Naive thymus-derived CD4-positive, alpha-beta T cell (primary cell): ENCODE measurements at regions of chr12 and their contacts with region 1.

Region 1: GRCh38 chr12:94074980-94075928 is 73.1 kb upstream of the PLXNC1 start:
- DNase-seq: peak in 1 of 9 donors; percentile 20
- ATAC-seq: peak; percentile 67
- H3K4me3 ChIP-seq: no peak overlapping the region
- H3K4me3 Mint-ChIP-seq: no peak overlapping the region
- H3K27ac ChIP-seq: no peak overlapping the region
- H3K27ac Mint-ChIP-seq: no peak overlapping the region
- H3K4me1 ChIP-seq: peaks cover 0 to 20% of the 10 kb centered on the region in 2 donors
- H3K4me1 Mint-ChIP-seq: peaks cover 18 to 67% (median 28%) of the 10 kb centered on the region in 7 donors
- H3K27me3 ChIP-seq: no peaks in the 10 kb centered on the region
- H3K27me3 Mint-ChIP-seq: peaks cover 0 to 6% (median 3%) of the 10 kb centered on the region in 5 donors

Region 2: GRCh38 chr12:93502802-93503623 is 572.2 kb before region 1 on chr12:
- CTCF ChIA-PET with region 1: interaction called, 13 read pairs
- POLR2A ChIA-PET with region 1: no interaction called
- intact Hi-C with region 1: no loop called
- DNase-seq: peak; percentile 16 to 71 (median 54)
- ATAC-seq: peak; percentile 67
- H3K4me3 ChIP-seq: no peak overlapping the region
- H3K4me3 Mint-ChIP-seq: no peak overlapping the region
- H3K27ac ChIP-seq: no peak overlapping the region
- H3K27ac Mint-ChIP-seq: peak overlapping the region in 3 of 9 donors; percentile 36 to 69 (median 60)
- H3K4me1 ChIP-seq: no peaks in the 10 kb centered on the region
- H3K4me1 Mint-ChIP-seq: peaks cover 0 to 29% (median 0%) of the 10 kb centered on the region in 7 donors
- H3K27me3 ChIP-seq: no peaks in the 10 kb centered on the region
- H3K27me3 Mint-ChIP-seq: no peaks in the 10 kb centered on the region

Region 3: GRCh38 chr12:93766796-93767523 is 308.3 kb before region 1 on chr12:
- CTCF ChIA-PET with region 1: interaction called, 33 read pairs
- POLR2A ChIA-PET with region 1: no interaction called
- intact Hi-C with region 1: loop called in 1 of 2 experiments (anchors 1 kb)
- DNase-seq: peak in 6 of 9 donors; percentile 23 to 58 (median 28)
- ATAC-seq: peak; percentile 84
- H3K4me3 ChIP-seq: no peak overlapping the region
- H3K4me3 Mint-ChIP-seq: peak overlapping the region in 5 of 10 donors; percentile 0 to 53 (median 6)
- H3K27ac ChIP-seq: no peak overlapping the region
- H3K27ac Mint-ChIP-seq: peak overlapping the region in 7 of 9 donors; percentile 6 to 74 (median 27)
- H3K4me1 ChIP-seq: no peaks in the 10 kb centered on the region
- H3K4me1 Mint-ChIP-seq: peaks cover 11 to 53% (median 17%) of the 10 kb centered on the region in 7 donors
- H3K27me3 ChIP-seq: no peaks in the 10 kb centered on the region
- H3K27me3 Mint-ChIP-seq: no peaks in the 10 kb centered on the region

Region 4: GRCh38 chr12:93894391-93895088 is 180.7 kb before region 1 on chr12:
- CTCF ChIA-PET with region 1: interaction called, 5 read pairs
- POLR2A ChIA-PET with region 1: no interaction called
- intact Hi-C with region 1: loop called in 1 of 2 experiments (anchors 10 kb)
- DNase-seq: no peak
- ATAC-seq: peak; percentile 31
- H3K4me3 ChIP-seq: no peak overlapping the region
- H3K4me3 Mint-ChIP-seq: no peak overlapping the region
- H3K27ac ChIP-seq: no peak overlapping the region
- H3K27ac Mint-ChIP-seq: peak overlapping the region in 3 of 9 donors; percentile 3 to 58 (median 52)
- H3K4me1 ChIP-seq: peaks cover 0 to 13% of the 10 kb centered on the region in 2 donors
- H3K4me1 Mint-ChIP-seq: peaks cover 11 to 60% (median 33%) of the 10 kb centered on the region in 7 donors
- H3K27me3 ChIP-seq: no peaks in the 10 kb centered on the region
- H3K27me3 Mint-ChIP-seq: no peaks in the 10 kb centered on the region

Region 5: DNA sequence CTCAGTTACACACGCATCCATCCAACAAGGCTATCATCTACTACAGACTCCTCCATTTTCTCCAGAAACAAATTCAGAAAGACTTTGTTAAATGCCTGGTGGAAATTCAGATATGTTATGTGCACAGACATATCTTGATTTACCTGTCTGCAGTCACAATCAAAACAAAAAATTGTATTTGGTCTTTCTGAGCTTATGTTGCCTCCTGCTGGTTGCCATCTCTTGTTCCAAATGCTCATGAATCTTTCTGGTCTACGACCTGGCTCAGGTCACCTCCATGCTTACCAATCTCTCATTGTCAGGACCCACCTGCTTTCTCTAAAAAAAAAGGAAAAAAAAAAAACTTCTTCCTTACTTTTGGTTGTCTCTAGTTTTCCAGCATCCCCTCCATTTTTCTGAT is 96.1 kb before region 1 on chr12:
- CTCF ChIA-PET with region 1: interaction called, 5 read pairs
- POLR2A ChIA-PET with region 1: no interaction called
- intact Hi-C with region 1: loop called in 1 of 2 experiments (anchors 5 kb)
- DNase-seq: peak in 4 of 9 donors; percentile 21 to 51 (median 31)
- ATAC-seq: peak; percentile 27
- H3K4me3 ChIP-seq: no peak overlapping the region
- H3K4me3 Mint-ChIP-seq: no peak overlapping the region
- H3K27ac ChIP-seq: no peak overlapping the region
- H3K27ac Mint-ChIP-seq: peak overlapping the region in 1 of 9 donors; percentile 27
- H3K4me1 ChIP-seq: no peaks in the 10 kb centered on the region
- H3K4me1 Mint-ChIP-seq: peaks cover 13 to 48% (median 30%) of the 10 kb centered on the region in 7 donors
- H3K27me3 ChIP-seq: no peaks in the 10 kb centered on the region
- H3K27me3 Mint-ChIP-seq: peaks cover 0 to 6% (median 0%) of the 10 kb centered on the region in 5 donors

Region 6: DNA sequence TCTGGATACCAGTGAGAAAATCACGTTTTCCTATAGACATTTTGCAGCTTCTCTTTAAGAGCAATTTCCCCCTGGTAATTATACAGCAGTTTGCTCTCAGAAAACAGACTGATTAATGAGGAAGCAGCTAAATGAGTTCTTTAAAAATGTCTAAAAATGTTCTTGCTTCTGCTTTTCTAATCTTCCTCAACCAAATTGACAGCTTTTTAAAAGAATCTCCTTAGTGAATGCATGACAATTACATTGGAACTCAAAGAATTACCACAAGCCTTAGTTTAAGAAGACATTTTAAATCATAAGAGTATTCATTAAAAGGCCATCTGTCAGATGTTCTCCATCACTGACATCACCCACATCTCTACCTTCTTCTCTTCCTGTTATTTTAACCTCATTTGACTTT is 62.7 kb before region 1 on chr12:
- CTCF ChIA-PET with region 1: interaction called, 9 read pairs
- POLR2A ChIA-PET with region 1: interaction called, 5 read pairs
- intact Hi-C with region 1: loop called in 1 of 2 experiments (anchors 5 kb)
- DNase-seq: no peak
- ATAC-seq: no peak
- H3K4me3 ChIP-seq: no peak overlapping the region
- H3K4me3 Mint-ChIP-seq: peak overlapping the region in 2 of 10 donors; percentile 2 to 5
- H3K27ac ChIP-seq: no peak overlapping the region
- H3K27ac Mint-ChIP-seq: peak overlapping the region in 6 of 9 donors; percentile 4 to 89 (median 40)
- H3K4me1 ChIP-seq: peaks cover 0 to 18% of the 10 kb centered on the region in 2 donors
- H3K4me1 Mint-ChIP-seq: peaks cover 12 to 64% (median 40%) of the 10 kb centered on the region in 7 donors
- H3K27me3 ChIP-seq: no peaks in the 10 kb centered on the region
- H3K27me3 Mint-ChIP-seq: no peaks in the 10 kb centered on the region